ENCODE measurements at regions of chr2 and their contacts with region 1.

Region 1: DNA sequence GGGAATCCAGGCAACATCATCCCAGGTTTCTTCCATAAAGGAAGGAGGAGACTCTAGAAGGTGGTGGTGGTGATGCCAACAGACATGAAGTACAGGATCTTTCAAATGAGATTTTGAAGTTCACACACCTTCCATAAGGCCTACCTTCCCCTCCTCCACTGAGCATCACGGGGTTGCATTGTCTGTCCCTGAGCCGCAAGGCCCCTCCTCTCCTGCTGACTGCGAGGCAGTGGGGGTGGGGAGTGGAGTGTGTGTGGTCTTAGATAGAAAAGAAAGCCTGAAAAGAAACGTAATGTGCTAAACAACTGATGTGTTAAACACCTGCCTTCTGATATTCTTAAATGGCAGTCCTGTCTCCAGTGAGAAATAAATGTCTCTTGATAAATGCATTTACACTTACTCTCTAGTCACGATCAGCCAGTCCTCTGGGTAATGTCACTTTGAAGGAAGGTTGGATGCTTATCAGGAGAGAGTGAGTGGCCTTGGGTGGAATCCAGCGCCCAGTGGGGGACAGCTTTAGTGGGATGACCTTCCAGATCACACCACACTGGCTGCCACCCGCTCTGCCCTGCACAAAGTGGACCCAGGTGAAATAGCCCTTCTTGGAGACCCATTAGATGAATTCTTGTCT is 5.5 kb upstream of the SCYGR5 start:
- DNase-seq: no peak
- H3K4me3 ChIP-seq: no peak overlapping the region
- H3K27ac ChIP-seq: no peak overlapping the region
- H3K4me1 ChIP-seq: no peaks in the 10 kb centered on the region
- H3K27me3 ChIP-seq: no peaks in the 10 kb centered on the region
- CTCF ChIP-seq: no peak
- EP300 ChIP-seq: no peak
- POLR2A ChIP-seq: no peak

Region 2: GRCh38 chr2:226673314-226673723 is 987.8 kb before region 1 on chr2:
- intact Hi-C with region 1: no loop called
- DNase-seq: no peak
- H3K4me3 ChIP-seq: no peak overlapping the region
- H3K27ac ChIP-seq: no peak overlapping the region
- H3K4me1 ChIP-seq: peaks cover 12 to 14% (median 12%) of the 10 kb centered on the region in 4 donors
- H3K27me3 ChIP-seq: no peaks in the 10 kb centered on the region
- CTCF ChIP-seq: no peak
- EP300 ChIP-seq: no peak
- POLR2A ChIP-seq: no peak

Region 3: GRCh38 chr2:227862227-227862740 is 201.2 kb after region 1 on chr2:
- intact Hi-C with region 1: loop called (anchors 10 kb)
- DNase-seq: no peak
- H3K4me3 ChIP-seq: no peak overlapping the region
- H3K27ac ChIP-seq: no peak overlapping the region
- H3K4me1 ChIP-seq: peaks cover 0 to 23% (median 8%) of the 10 kb centered on the region in 4 donors
- H3K27me3 ChIP-seq: no peaks in the 10 kb centered on the region
- CTCF ChIP-seq: peak in 2 of 3 experiments; percentile 12 to 45
- EP300 ChIP-seq: no peak
- POLR2A ChIP-seq: no peak

Measured in esophagus muscularis mucosa (tissue), 4 donors.